ENCODE measurements at regions of chr6 and their contacts with region 1.

Region 1: GRCh38 chr6:10800829-10801535 is 37.4 kb downstream of the MAK start:
- DNase-seq: peak; percentile 76
- ATAC-seq: peak; percentile 92
- H3K4me3 Mint-ChIP-seq: no peak overlapping the region
- H3K27ac Mint-ChIP-seq: no peak overlapping the region
- H3K4me1 Mint-ChIP-seq: no peaks in the 10 kb centered on the region
- H3K27me3 Mint-ChIP-seq: no peaks in the 10 kb centered on the region

Region 2: GRCh38 chr6:10478187-10479040 is 322.6 kb before region 1 on chr6:
- CTCF ChIA-PET with region 1: interaction called, 30 read pairs
- POLR2A ChIA-PET with region 1: no interaction called
- intact Hi-C with region 1: loop called (anchors 1 kb)
- DNase-seq: no peak
- ATAC-seq: peak; percentile 44
- H3K4me3 Mint-ChIP-seq: no peak overlapping the region
- H3K27ac Mint-ChIP-seq: peak overlapping the region; percentile 7
- H3K4me1 Mint-ChIP-seq: no peaks in the 10 kb centered on the region
- H3K27me3 Mint-ChIP-seq: peaks cover 5% of the 10 kb centered on the region

Region 3: DNA sequence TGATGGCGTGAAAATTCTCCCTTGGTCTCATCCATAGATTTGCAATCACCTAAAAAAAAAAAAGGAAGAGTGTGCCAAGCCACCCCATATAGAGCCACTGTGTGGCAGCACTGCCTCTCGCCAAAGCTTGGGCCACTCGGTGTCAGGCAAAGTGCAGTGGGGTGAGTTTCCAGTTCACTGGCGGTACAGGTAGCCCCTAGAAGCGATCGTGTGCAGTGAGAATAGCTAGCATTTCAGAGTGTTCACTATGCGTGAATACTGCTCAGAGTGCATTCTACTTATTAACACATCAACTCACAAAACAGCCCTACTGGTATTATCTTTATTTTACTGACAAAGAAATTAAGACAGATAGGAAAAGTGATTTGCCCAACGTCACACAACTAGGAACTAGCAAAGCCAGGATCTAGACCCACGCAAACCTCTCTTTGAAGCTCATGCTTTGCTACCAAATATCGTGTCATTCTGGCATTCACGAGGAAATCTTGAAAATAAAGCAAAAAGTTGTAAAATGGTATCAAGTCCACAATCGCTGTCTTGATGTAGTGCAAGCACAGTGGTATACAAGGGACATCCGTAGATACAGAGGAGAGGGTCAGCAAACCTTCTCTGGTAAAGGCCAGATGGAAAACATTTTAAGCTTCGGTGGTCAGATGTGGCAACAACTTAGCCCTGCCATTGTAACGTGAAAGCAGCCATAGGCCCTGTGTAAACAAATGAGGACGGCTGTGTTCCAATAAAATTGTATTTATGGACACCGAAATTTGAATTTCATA is 290.2 kb before region 1 on chr6:
- CTCF ChIA-PET with region 1: interaction called, 13 read pairs
- POLR2A ChIA-PET with region 1: no interaction called
- intact Hi-C with region 1: loop called (anchors 1 kb)
- DNase-seq: peak; percentile 73
- ATAC-seq: peak; percentile 99
- H3K4me3 Mint-ChIP-seq: no peak overlapping the region
- H3K27ac Mint-ChIP-seq: no peak overlapping the region
- H3K4me1 Mint-ChIP-seq: peaks cover 5% of the 10 kb centered on the region
- H3K27me3 Mint-ChIP-seq: peaks cover 2% of the 10 kb centered on the region

Region 4: DNA sequence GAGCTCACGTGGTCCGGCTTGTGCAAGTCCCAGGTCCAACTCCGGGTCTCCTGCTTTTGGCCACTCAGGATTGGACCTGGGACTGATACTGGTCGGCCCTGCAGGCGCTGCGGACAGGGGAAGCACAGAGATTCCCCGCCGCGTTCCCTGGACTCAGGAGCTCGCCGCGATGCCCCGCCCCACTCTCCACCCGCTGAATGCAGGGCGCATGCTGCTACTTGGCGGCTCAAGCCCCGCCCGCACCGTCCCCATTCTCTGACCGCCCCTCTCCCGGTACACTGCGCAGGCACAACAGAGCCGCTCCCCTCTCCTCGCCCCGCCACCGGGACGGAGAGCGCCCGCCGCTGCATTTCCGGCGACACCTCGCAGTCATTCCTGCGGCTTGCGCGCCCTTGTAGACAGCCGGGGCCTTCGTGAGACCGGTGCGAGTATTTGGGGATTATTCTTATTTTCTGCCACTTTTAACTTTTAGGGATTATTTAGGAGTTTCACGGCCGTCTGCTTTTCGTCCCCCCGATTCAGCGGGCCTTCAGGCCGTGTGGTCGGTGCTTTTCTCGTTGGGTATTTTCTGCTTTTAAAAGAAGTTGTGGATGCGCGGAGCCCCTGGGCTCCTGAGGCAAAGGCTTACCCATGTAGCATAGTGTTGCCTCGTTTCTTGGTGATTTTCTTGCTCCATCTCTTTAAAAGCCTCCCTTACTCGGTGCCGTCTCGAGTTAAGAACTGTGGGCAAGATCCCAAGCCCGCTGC is 78.0 kb before region 1 on chr6 and contains the start of gene TMEM14C:
- CTCF ChIA-PET with region 1: interaction called, 4 read pairs
- POLR2A ChIA-PET with region 1: no interaction called
- intact Hi-C with region 1: loop called in 1 of 2 experiments (anchors 2 kb)
- DNase-seq: peak; percentile 94
- ATAC-seq: peak; percentile 95
- H3K4me3 Mint-ChIP-seq: peak within 1 kb of the TSS; percentile 92
- H3K27ac Mint-ChIP-seq: peak within 1 kb of the TSS; percentile 93
- H3K4me1 Mint-ChIP-seq: peaks cover 49% of the 10 kb centered on the region
- H3K27me3 Mint-ChIP-seq: no peaks in the 10 kb centered on the region
- total RNA-seq, gene TMEM14C: 67.6 to 81.7 TPM